Ovary (tissue), 10 donors: ENCODE measurements at regions of chr5 and their contacts with region 1.

Region 1: DNA sequence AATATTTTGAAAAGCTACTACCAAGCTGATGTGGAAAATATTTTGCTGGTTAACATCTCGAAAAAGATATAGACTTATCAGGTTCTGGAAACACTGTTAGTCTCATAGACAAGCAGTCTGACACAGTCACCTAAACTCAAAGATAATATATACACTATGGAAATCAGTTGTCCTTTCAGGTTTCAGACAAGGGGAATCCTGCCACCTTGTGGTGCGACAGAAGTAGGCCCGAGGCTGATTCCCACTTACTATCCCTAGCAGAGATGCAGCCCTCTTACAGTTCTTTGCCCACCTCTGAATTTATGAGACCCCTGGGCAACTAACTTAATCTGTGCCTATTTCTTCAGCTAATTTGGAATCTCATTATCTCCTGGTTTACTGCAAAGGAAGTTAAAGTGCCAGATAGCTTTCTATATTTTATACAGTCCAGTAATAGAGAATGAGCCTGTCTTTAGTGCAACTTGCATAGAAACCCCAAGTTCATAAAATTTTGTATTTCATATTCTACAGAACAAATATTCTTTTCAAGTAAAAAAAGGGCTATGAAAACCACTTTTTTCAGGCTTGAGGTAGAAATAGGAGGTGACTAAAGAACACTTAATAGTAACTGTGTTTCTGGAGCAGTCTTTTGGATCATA is 16.9 kb downstream of the RAD1 start:
- DNase-seq: peak; percentile 52 to 74 (median 68)
- H3K4me3 ChIP-seq: no peak overlapping the region
- H3K27ac ChIP-seq: no peak overlapping the region
- H3K4me1 ChIP-seq: no peaks in the 10 kb centered on the region
- H3K27me3 ChIP-seq: no peaks in the 10 kb centered on the region
- CTCF ChIP-seq: peak; percentile 57 to 79 (median 63)
- EP300 ChIP-seq: no peak
- POLR2A ChIP-seq: no peak

Region 2: GRCh38 chr5:34522599-34523386 is 375.6 kb before region 1 on chr5:
- intact Hi-C with region 1: loop called in 3 of 4 experiments (anchors 2 to 5 kb)
- DNase-seq: peak; percentile 60 to 84 (median 71)
- H3K4me3 ChIP-seq: no peak overlapping the region
- H3K27ac ChIP-seq: no peak overlapping the region
- H3K4me1 ChIP-seq: no peaks in the 10 kb centered on the region
- H3K27me3 ChIP-seq: no peaks in the 10 kb centered on the region
- CTCF ChIP-seq: peak; percentile 53 to 74 (median 66)
- EP300 ChIP-seq: no peak
- POLR2A ChIP-seq: no peak

Region 3: GRCh38 chr5:34801949-34802348 is 96.4 kb before region 1 on chr5:
- intact Hi-C with region 1: no loop called
- DNase-seq: no peak
- H3K4me3 ChIP-seq: no peak overlapping the region
- H3K27ac ChIP-seq: no peak overlapping the region
- H3K4me1 ChIP-seq: no peaks in the 10 kb centered on the region
- H3K27me3 ChIP-seq: no peaks in the 10 kb centered on the region
- CTCF ChIP-seq: no peak
- EP300 ChIP-seq: no peak
- POLR2A ChIP-seq: no peak

Region 4: GRCh38 chr5:35083150-35083549 is 184.8 kb after region 1 on chr5:
- intact Hi-C with region 1: no loop called
- DNase-seq: no peak
- H3K4me3 ChIP-seq: no peak overlapping the region
- H3K27ac ChIP-seq: no peak overlapping the region
- H3K4me1 ChIP-seq: peaks cover 4% of the 10 kb centered on the region
- H3K27me3 ChIP-seq: no peaks in the 10 kb centered on the region
- CTCF ChIP-seq: no peak
- EP300 ChIP-seq: no peak
- POLR2A ChIP-seq: no peak